ENCODE measurements at regions of chr7 and their contacts with region 1.

Region 1: GRCh38 chr7:148962823-148963582 is 65.3 kb downstream of the PDIA4 start:
- DNase-seq: peak; percentile 79
- H3K4me3 Mint-ChIP-seq: peak overlapping the region; percentile 89
- H3K27ac Mint-ChIP-seq: peak overlapping the region; percentile 87
- H3K4me1 Mint-ChIP-seq: peaks cover 34% of the 10 kb centered on the region
- H3K27me3 Mint-ChIP-seq: peaks cover 36% of the 10 kb centered on the region

Region 2: DNA sequence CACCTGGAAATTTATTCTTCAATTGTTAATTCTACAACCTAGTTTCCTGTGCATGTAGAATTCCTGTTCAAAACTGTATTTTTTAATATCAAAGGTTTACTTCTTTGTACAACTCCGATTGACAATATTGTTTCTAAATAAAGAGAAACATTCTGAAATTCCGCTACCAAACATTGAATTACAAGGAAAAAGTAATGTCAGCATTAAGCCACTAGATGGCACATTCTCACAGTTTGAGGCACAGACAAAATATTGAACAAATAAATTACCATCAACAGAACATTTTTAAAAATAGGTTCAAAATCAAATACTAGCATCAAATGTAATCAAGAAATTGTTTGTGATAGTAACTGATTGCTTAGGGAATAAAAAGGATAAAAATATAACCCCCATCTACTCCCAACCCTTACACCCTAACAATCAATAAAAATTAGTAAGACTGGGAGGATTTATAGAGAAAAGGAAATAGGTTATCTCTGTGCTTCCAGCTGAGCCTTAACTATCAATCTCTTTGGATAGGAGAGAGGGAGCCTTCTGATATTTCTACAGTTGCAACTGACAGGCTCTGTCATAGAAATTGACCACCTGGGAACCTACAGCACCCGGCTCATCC is 459.0 kb before region 1 on chr7:
- CTCF ChIA-PET with region 1: interaction called, 24 read pairs
- DNase-seq: no peak
- H3K4me3 Mint-ChIP-seq: no peak overlapping the region
- H3K27ac Mint-ChIP-seq: no peak overlapping the region
- H3K4me1 Mint-ChIP-seq: peaks cover 4% of the 10 kb centered on the region
- H3K27me3 Mint-ChIP-seq: peaks cover 23% of the 10 kb centered on the region

Region 3: DNA sequence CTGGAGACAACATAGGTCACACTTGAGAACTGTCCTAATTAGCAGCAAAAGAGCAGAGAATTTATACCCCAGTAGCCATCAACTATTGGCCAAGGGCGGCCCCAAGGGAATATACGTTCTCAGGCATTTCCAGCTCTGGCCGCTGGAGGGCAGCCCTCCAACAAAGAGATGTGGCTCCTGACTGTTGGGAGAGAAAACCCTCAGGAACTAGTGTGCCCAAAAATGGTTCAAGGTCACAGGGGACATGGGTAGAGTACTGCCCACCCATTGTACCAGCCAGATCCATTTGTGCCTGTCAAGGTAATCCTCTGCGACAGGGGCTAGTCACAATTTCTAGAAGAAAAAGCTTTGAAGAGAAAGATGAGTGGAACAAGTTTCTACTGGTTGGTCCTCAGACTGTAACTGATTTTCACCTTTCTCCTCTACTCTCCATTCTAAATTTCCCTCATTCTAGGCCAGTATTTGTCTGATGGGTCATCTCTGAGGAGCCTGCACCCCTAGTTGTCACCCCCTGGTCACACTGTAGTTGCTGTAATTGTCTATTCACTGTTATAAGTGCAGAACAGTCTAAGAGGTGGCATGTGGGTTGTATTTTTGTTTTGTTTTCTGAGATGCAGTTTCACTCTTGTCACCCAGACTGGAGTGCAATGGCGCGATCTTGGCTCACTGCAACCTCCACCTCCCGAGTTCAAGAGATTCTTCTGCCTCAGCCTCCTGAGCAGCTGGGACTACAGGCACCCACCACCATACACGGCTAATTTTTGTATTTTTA is 387.2 kb before region 1 on chr7:
- CTCF ChIA-PET with region 1: interaction called, 23 read pairs
- DNase-seq: peak; percentile 79
- H3K4me3 Mint-ChIP-seq: no peak overlapping the region
- H3K27ac Mint-ChIP-seq: no peak overlapping the region
- H3K4me1 Mint-ChIP-seq: peaks cover 7% of the 10 kb centered on the region
- H3K27me3 Mint-ChIP-seq: peaks cover 8% of the 10 kb centered on the region

Region 4: DNA sequence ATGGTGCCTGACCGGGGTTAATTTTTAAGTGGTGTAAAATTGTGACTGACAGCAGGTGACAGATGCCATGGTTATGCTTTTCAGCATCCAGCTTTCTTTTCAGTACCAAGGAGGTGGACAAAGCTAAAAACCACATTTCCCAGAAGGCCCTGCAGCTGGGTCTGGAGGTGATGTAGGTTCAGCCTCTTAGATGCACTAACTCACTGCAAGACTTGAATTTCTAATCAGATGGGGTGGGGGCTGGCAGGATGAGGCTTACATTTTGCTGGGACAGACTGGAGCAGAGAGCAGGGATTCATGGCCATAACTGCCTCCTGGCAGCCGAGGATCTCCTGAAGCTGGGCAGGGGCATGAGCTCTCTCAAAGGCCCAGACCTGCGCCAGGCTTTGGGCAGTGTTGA is 12.9 kb after region 1 on chr7:
- CTCF ChIA-PET with region 1: interaction called, 11 read pairs
- DNase-seq: no peak
- H3K4me3 Mint-ChIP-seq: no peak overlapping the region
- H3K27ac Mint-ChIP-seq: no peak overlapping the region
- H3K4me1 Mint-ChIP-seq: peaks cover 15% of the 10 kb centered on the region
- H3K27me3 Mint-ChIP-seq: peaks cover 9% of the 10 kb centered on the region

Region 5: DNA sequence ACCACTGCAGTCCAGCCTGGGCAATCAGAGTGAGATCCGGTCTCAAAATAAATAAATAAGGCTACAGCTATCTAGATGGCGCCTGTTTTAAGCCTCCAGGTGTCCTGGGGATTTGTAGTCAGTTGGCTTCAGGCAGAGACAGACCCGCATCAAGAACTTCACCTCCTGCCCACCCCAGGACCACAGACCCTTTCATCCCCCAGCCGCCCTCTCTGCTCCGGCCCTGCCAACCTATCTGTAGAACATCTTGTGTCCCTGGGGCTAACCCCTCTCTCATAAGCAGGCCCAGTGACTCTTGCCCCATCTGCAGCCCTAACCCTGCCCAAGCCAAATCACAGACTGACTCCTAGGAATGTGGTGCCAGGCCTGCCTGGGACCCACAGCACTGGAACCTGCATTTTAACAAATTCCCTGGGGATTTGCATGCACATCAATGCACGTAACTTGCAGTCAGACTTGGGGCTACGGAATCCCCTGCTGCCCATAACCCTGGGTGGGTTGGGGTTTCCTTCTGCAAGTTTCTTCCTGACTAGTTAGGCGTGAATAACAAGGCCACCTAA is 47.5 kb after region 1 on chr7:
- CTCF ChIA-PET with region 1: no interaction called
- DNase-seq: no peak
- H3K4me3 Mint-ChIP-seq: no peak overlapping the region
- H3K27ac Mint-ChIP-seq: no peak overlapping the region
- H3K4me1 Mint-ChIP-seq: peaks cover 2% of the 10 kb centered on the region
- H3K27me3 Mint-ChIP-seq: no peaks in the 10 kb centered on the region

Region 6: DNA sequence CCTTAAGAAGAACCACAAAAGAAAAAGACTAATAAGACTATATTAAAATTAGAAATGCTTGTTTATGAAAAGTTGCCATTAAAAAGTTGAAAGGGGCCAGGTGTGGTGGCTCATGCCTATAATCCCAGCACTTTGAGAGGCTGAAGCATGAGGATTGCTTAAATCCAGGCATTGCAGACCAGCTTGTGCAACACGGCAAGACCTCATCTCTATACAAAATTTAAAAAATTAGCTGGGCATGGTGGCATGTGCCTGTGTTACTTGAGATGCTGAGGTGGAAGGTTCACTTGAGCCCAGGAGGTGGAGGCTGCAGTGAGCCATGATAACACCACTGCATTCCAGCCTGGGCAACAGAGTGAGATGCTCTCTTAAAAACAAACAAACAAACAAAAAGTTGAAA is 429.4 kb after region 1 on chr7:
- CTCF ChIA-PET with region 1: no interaction called
- DNase-seq: no peak
- H3K4me3 Mint-ChIP-seq: no peak overlapping the region
- H3K27ac Mint-ChIP-seq: no peak overlapping the region
- H3K4me1 Mint-ChIP-seq: no peaks in the 10 kb centered on the region
- H3K27me3 Mint-ChIP-seq: peaks cover 39% of the 10 kb centered on the region